Cardiac septum (tissue), 1 donor: ENCODE measurements at regions of chr4 and their contacts with region 1.

Region 1: DNA sequence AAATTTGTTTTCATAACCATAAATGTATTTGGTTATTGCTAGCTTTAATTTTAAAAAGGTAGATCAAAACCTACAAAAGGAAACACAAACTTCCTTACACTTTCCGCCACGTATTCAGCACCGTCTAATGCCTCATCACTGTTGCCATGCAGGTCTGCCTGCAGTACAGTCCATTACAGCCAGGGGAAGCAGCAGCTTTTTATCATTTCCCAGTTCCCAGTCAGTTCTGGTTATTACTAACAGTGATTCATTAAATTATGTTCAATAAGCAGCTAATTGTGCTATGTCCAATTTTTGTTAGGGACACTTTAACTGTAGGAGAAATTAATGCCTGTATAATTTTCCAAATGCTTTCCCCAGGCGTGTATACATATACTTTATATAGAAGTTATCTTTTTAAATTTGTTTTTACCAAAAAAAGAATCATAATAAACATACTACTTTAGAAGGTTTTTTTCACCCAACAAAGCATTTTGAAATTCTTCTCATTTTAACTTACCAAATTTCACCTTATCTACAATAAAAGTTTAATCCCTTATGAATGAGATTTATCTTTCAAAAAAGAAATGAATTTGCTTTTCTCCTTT is 93.3 kb downstream of the ANXA3 start:
- DNase-seq: no peak

Region 2: GRCh38 chr4:78691971-78692821 is 47.4 kb after region 1 on chr4:
- intact Hi-C with region 1: loop called (anchors 5 kb)
- DNase-seq: no peak

Region 3: DNA sequence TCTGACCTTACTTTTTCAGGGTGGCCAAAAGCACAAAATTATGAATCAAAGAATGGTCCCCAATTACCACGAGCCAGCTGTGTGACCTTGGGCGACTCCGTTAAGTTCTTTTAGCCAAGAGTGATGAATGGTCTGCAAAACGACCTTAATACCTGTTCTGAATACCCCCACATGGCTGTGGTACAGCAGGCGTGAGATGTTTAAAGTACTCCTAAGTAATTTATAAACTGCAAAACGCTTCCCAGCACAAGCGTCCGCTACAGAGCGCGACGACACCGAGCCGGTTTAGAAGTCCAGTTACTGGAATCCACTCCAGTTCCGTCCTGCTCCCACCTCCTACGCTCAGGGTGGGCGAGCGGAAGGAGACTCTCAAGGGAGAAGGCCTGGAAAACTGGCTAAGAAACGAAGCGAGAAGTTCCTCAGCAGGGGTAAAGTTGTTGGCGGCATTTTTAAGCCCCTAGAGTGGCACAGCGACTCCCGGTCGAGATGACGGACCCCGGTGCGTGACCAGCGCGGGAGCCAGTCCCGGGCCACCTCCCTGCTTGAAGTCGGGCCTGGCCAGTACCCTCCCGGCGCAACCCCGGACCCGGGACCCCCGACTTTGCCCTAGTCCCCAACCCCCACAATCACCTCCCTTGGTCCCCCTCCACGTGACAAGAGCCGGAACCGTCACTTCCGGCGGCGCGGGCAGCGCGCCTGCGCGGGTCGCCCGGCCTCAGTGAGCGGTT is 130.6 kb after region 1 on chr4:
- intact Hi-C with region 1: loop called (anchors 5 kb)
- DNase-seq: peak; percentile 94

Region 4: GRCh38 chr4:78864405-78865024 is 219.7 kb after region 1 on chr4:
- intact Hi-C with region 1: no loop called
- DNase-seq: no peak